Activated CD4-positive, alpha-beta memory T cell treated with anti-CD3 and anti-CD28 coated beads, Interleukin-2, amount 10 ng/mL, durations not matched to agents 7 days and 5 days (primary cell): ENCODE measurements at regions of chr1 and their contacts with region 1.

Region 1: GRCh38 chr1:241998412-241998921 is 431 bp downstream of the MAP1LC3C start:
- DNase-seq: peak; percentile 54
- H3K4me3 Mint-ChIP-seq: peak overlapping the region; percentile 37
- H3K27ac Mint-ChIP-seq: no peak overlapping the region
- H3K4me1 Mint-ChIP-seq: peaks cover 6% of the 10 kb centered on the region
- H3K27me3 Mint-ChIP-seq: no peaks in the 10 kb centered on the region

Region 2: DNA sequence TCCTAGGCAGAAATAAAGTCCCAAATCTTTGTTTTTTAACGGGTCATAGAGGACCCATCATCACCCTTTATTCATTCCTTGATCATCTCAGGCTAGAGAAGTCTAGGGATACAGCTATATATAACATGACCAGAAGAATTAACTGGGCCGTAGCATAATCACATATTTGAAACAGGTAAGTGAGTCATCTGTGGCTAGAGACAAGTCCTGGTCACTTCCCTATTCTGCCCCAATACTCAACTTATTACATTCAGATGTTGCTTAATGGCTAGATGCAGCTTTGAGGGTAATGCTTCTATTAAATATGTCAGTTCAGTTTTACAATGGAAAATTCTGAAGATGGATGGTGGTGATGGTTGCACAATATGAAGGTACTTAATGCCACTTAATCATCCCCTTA is 103.5 kb before region 1 on chr1:
- CTCF ChIA-PET with region 1: interaction called, 16 read pairs
- POLR2A ChIA-PET with region 1: no interaction called
- DNase-seq: no peak
- H3K4me3 Mint-ChIP-seq: no peak overlapping the region
- H3K27ac Mint-ChIP-seq: no peak overlapping the region
- H3K4me1 Mint-ChIP-seq: no peaks in the 10 kb centered on the region
- H3K27me3 Mint-ChIP-seq: no peaks in the 10 kb centered on the region

Region 3: GRCh38 chr1:241985787-241986186 is 12.7 kb before region 1 on chr1:
- CTCF ChIA-PET with region 1: interaction called, 11 read pairs
- POLR2A ChIA-PET with region 1: no interaction called
- DNase-seq: peak; percentile 19
- H3K4me3 Mint-ChIP-seq: no peak overlapping the region
- H3K27ac Mint-ChIP-seq: no peak overlapping the region
- H3K4me1 Mint-ChIP-seq: no peaks in the 10 kb centered on the region
- H3K27me3 Mint-ChIP-seq: no peaks in the 10 kb centered on the region